ENCODE measurements at regions of chr5 and their contacts with region 1.

Region 1: DNA sequence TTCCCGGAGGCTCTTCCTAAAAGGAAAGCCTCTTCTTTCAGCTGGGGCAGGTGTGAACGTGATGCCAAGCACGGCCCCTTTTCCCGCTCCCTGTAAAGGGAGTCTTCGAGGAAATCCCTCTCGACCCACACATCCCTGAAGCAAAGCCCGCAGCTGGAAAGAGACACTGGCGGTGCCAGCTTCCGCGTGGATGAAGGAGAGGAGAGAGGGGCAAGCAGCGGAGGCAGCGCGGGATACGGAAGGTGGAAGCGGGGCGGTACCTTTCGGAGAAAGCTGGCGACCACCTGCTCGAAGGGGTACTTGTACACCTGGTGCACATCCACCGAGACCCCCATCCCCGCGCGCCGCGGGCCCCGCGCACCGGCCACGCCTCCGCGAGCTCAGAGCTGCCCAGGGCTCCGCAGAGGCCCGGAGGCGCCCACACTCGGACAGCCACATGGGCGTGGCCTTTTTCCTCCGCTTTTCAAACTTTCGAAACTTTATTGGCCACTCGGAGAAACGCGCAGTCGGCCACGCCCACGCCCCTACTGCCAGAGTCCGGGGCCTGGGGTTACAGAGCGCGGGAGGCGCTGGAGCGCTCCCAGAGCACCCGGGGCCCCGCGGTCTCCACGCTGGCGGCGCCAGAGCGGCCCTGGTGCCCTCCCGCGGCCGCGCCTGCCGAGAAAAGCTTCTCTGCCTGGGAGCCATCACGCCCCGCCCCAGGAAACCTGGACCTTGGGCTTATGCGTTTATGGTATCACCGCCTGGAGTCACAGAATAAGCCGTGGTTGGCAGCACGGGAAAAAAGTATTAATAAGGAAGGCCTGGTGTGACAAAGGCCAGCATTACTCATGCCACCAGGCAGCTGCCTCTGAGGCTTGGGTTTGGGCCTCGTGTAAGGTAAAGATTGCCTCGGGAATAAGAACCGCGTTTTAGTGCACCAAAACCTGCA is at the start of gene PRELID2:
- DNase-seq: peak; percentile 94
- ATAC-seq: peak; percentile 95
- total RNA-seq, gene PRELID2: 18.9 TPM

Region 2: GRCh38 chr5:145965804-145966203 is 130.6 kb after region 1 on chr5:
- intact Hi-C with region 1: no loop called
- DNase-seq: no peak
- ATAC-seq: peak; percentile 56

Region 3: GRCh38 chr5:146049014-146049703 is 214.0 kb after region 1 on chr5:
- intact Hi-C with region 1: loop called (anchors 5 kb)
- DNase-seq: no peak
- ATAC-seq: peak; percentile 57